WTC11 (cell line): ENCODE measurements at regions of chr11 and their contacts with region 1.

Region 1: GRCh38 chr11:134863294-134863693 is 451.3 kb upstream of the B3GAT1 start:
- DNase-seq: no peak
- ATAC-seq: no peak
- H3K4me3 Mint-ChIP-seq: no peak overlapping the region
- H3K27ac Mint-ChIP-seq: no peak overlapping the region
- H3K4me1 Mint-ChIP-seq: peaks cover 6% of the 10 kb centered on the region; the same call in 1 of the 2 replicates
- H3K27me3 Mint-ChIP-seq: no peaks in the 10 kb centered on the region; the same call in none of the 2 replicates
- CTCF ChIP-seq: no peak

Region 2: GRCh38 chr11:134731213-134731961 is 131.9 kb before region 1 on chr11:
- CTCF ChIA-PET with region 1: interaction called, 11 read pairs
- POLR2A ChIA-PET with region 1: no interaction called
- DNase-seq: peak; percentile 50
- ATAC-seq: peak; percentile 93
- H3K4me3 Mint-ChIP-seq: no peak overlapping the region
- H3K27ac Mint-ChIP-seq: no peak overlapping the region
- H3K4me1 Mint-ChIP-seq: peaks cover 40% of the 10 kb centered on the region
- H3K27me3 Mint-ChIP-seq: peaks cover 16% of the 10 kb centered on the region
- CTCF ChIP-seq: no peak

Region 3: DNA sequence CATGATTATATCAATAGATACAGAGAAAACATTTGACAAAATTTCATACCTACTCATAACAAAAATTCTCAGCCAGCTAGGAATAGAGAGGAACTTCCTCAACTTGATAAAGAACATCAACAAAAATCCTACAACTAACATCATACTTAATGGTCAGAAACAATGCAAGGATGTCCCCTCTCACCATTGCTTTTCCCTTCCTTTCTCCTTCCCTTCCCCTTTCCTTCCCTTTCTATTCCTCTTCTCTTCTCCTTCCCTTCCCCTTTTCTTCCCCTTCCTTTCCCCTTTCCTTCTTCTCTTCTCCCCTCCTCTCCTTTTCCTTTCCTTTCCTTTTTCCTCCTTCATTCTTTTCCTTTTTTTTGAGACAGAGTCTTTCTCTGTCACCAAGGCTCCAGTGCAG is 33.0 kb before region 1 on chr11:
- CTCF ChIA-PET with region 1: no interaction called
- POLR2A ChIA-PET with region 1: no interaction called
- DNase-seq: no peak
- ATAC-seq: no peak
- H3K4me3 Mint-ChIP-seq: no peak overlapping the region
- H3K27ac Mint-ChIP-seq: no peak overlapping the region
- H3K4me1 Mint-ChIP-seq: no peaks in the 10 kb centered on the region
- H3K27me3 Mint-ChIP-seq: peaks cover 5% of the 10 kb centered on the region
- CTCF ChIP-seq: no peak

Region 4: DNA sequence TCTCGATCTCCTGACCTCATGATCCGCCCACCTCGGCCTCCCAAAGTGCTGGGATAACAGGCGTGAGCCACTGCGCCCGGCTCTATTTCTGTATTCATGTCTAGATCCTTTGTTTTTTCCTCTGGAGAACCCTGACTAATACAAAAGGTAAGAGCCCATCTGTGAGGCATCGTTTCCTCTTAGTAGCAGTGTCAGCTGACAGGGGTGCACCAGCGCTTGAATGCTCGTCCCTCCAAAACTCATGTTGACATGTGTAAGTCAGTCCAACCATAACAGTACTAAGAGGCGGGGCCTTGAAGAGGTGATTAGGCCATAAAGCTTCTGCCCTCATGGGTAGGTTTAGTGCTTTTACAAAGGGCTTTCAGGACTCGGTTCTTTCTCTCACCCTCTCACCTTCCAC is 18.8 kb after region 1 on chr11:
- CTCF ChIA-PET with region 1: interaction called, 14 read pairs
- POLR2A ChIA-PET with region 1: no interaction called
- DNase-seq: no peak
- ATAC-seq: no peak
- H3K4me3 Mint-ChIP-seq: no peak overlapping the region
- H3K27ac Mint-ChIP-seq: no peak overlapping the region
- H3K4me1 Mint-ChIP-seq: peaks cover 8% of the 10 kb centered on the region
- H3K27me3 Mint-ChIP-seq: peaks cover 15% of the 10 kb centered on the region
- CTCF ChIP-seq: no peak

Region 5: GRCh38 chr11:135027461-135027860 is 164.2 kb after region 1 on chr11:
- CTCF ChIA-PET with region 1: interaction called, 10 read pairs
- POLR2A ChIA-PET with region 1: interaction called, 3 read pairs
- DNase-seq: peak; percentile 70
- ATAC-seq: peak; percentile 73
- H3K4me3 Mint-ChIP-seq: no peak overlapping the region
- H3K27ac Mint-ChIP-seq: no peak overlapping the region
- H3K4me1 Mint-ChIP-seq: peaks cover 20% of the 10 kb centered on the region
- H3K27me3 Mint-ChIP-seq: peaks cover 4% of the 10 kb centered on the region; the same call in 1 of the 2 replicates
- CTCF ChIP-seq: no peak

Region 6: DNA sequence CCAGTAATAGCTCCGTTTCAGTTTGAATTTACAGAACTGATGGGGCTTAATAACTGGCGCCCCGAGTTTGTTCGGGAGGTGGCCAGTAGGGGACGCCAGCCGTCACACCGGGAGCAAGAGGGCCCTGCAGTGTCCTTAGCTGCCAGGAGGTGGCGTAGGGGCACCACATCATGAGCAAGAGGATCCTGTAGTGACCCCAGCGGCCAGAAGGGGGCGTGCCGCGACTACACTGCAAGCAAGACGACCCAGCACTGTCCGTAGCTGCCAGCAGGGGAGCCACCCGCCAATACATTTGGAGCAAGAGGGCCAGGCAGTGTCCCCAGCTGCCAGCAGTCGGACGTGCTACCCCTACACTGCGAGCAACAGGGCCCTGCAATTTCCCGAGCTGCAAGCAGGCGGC is 212.4 kb after region 1 on chr11:
- CTCF ChIA-PET with region 1: interaction called, 10 read pairs
- POLR2A ChIA-PET with region 1: no interaction called
- DNase-seq: peak; percentile 92
- ATAC-seq: peak; percentile 86
- H3K4me3 Mint-ChIP-seq: no peak overlapping the region
- H3K27ac Mint-ChIP-seq: no peak overlapping the region
- H3K4me1 Mint-ChIP-seq: no peaks in the 10 kb centered on the region
- H3K27me3 Mint-ChIP-seq: no peaks in the 10 kb centered on the region; the same call in 1 of the 2 replicates
- CTCF ChIP-seq: peak; percentile 99